ENCODE measurements at regions of chr5 and their contacts with region 1.

Region 1: DNA sequence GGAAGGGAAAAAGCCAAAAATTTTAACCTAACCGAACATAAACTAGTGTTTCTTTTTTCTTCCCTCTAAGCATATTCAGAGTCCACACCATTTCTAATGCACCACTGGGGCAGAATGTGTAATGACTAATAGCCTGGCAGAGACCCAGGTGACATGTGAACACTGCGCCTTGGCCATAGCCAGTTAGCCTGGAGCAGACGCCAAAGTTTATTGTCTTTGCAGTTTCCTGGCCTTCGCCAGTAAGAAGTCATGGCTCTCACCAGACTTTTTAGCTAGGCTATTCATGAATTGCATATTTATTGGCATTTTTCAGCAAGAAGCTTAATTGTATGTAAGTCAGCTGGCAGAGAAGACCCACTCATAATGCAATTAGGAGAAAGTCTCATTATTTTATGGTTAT is 182.8 kb upstream of the SLC27A6 start:
- DNase-seq: peak; percentile 96
- H3K4me3 ChIP-seq: no peak overlapping the region
- H3K27ac ChIP-seq: peak overlapping the region; percentile 76
- H3K4me1 ChIP-seq: peaks cover 22% of the 10 kb centered on the region
- H3K27me3 ChIP-seq: no peaks in the 10 kb centered on the region
- CTCF ChIP-seq: no peak
- POLR2A ChIP-seq: no peak

Region 2: GRCh38 chr5:128799945-128800344 is 17.5 kb after region 1 on chr5:
- CTCF ChIA-PET with region 1: no interaction called
- POLR2A ChIA-PET with region 1: no interaction called
- dilution Hi-C with region 1: no loop called
- intact Hi-C with region 1: loop called (anchors 1 kb)
- DNase-seq: no peak
- H3K4me3 ChIP-seq: no peak overlapping the region
- H3K27ac ChIP-seq: no peak overlapping the region
- H3K4me1 ChIP-seq: peaks cover 6% of the 10 kb centered on the region
- H3K27me3 ChIP-seq: no peaks in the 10 kb centered on the region
- CTCF ChIP-seq: no peak
- POLR2A ChIP-seq: no peak

Region 3: GRCh38 chr5:128825826-128826225 is 43.4 kb after region 1 on chr5:
- CTCF ChIA-PET with region 1: no interaction called
- POLR2A ChIA-PET with region 1: no interaction called
- dilution Hi-C with region 1: no loop called
- intact Hi-C with region 1: no loop called
- DNase-seq: peak; percentile 83
- H3K4me3 ChIP-seq: no peak overlapping the region
- H3K27ac ChIP-seq: peak overlapping the region; percentile 35
- H3K4me1 ChIP-seq: peaks cover 26% of the 10 kb centered on the region
- H3K27me3 ChIP-seq: no peaks in the 10 kb centered on the region
- CTCF ChIP-seq: no peak
- POLR2A ChIP-seq: no peak

Measured in endothelial cell of umbilical vein (primary cell).